ENCODE measurements at regions of chr17 and their contacts with region 1.

Region 1: GRCh38 chr17:75904749-75905521 is at the start of gene MRPL38:
- DNase-seq: peak; percentile 68
- ATAC-seq: peak; percentile 98
- H3K4me3 ChIP-seq: peak within 1 kb of the TSS; percentile 69 to 87
- H3K27ac ChIP-seq: peak within 1 kb of the TSS; percentile 87
- H3K4me1 ChIP-seq: peaks cover 11% of the 10 kb centered on the region
- H3K27me3 ChIP-seq: no peaks in the 10 kb centered on the region
- CTCF ChIP-seq: peak; percentile 99
- total RNA-seq, gene MRPL38: 165 TPM

Region 2: DNA sequence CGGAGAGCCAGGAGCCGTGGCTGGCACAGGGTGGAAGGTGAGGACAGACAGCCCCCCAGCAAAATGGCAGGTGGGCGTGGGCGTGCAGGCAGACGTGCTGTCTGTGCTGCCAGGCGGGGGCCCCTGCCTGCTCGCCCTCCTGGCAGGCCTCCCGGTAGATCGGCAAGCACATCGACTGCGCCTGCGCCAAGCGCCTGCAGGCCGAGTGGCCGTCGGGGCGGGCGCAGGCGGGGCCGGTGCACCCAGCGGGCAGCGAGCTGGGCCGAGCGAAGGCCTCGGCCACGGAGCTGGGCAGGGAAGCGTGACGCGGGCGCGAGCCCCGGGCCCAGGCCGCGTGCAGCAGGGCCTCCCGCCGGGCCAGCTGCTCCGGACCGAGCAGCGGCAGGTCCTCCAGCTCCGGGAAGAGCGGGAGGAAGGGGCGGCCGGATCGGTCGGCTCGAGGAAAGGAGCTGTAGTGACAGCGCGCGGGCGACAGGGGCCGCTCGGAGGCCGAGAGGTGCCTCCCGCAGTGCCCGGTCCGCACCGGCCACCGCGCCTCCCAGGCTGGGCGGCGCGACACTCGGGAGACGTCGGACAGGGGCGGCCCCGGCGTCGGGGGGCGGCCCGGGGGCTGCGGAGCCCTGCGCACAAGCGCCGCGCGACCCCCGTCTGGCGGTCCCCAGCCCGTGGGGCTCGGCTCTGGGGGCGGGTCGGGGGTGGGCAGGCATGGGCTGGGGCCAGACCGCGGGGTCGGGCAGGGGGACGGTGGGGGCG is 1062.2 kb before region 1 on chr17:
- CTCF ChIA-PET with region 1: no interaction called
- POLR2A ChIA-PET with region 1: interaction called, 15 read pairs
- in situ Hi-C with region 1: no loop called
- intact Hi-C with region 1: no loop called
- DNase-seq: no peak
- ATAC-seq: peak; percentile 91
- H3K4me3 ChIP-seq: peak overlapping the region; percentile 50 to 52
- H3K27ac ChIP-seq: peak overlapping the region; percentile 66
- H3K4me1 ChIP-seq: peaks cover 12% of the 10 kb centered on the region
- H3K27me3 ChIP-seq: no peaks in the 10 kb centered on the region
- CTCF ChIP-seq: peak; percentile 94

Region 3: DNA sequence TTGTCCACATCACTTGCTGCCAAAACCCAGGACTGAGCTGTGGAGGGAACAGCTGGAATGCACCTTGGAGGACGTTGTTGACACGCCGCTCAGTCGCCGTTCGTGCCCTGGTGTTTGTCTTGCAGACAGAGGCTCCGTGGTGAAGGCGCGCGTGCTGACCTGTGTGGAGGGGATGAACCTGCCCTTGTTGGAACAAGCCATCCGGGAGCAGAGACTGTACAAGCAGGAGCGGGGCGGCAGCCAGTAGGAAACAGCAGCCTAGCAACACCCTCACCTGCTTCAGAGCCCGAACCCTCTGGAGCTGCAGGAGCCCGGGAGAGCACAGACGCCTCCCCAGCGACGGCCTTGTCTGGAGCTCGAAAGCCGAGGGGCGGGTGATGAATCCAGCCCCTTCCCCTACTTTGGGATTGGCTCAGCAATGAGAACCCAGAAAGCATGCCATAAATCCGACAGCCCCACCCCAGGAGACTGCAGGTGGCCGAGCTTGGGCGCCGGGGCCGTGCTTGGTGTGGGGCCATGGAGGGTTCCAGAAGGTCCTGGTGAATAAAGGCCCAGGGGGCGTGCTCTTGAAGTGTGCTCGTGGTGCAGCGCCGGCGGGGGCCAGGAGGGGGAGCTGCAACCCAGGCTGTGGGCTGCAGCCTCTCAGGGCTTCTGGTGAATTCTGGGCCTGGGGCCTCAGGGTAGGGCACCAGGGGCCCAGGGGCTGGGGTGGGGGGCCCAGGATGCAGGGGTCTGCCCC is 95.2 kb after region 1 on chr17:
- CTCF ChIA-PET with region 1: interaction called, 5 read pairs
- POLR2A ChIA-PET with region 1: no interaction called
- in situ Hi-C with region 1: no loop called
- intact Hi-C with region 1: loop called (anchors 5 kb)
- DNase-seq: no peak
- ATAC-seq: peak; percentile 61
- H3K4me3 ChIP-seq: no peak overlapping the region
- H3K27ac ChIP-seq: no peak overlapping the region
- H3K4me1 ChIP-seq: peaks cover 11% of the 10 kb centered on the region
- H3K27me3 ChIP-seq: no peaks in the 10 kb centered on the region
- CTCF ChIP-seq: peak; percentile 98

Region 4: DNA sequence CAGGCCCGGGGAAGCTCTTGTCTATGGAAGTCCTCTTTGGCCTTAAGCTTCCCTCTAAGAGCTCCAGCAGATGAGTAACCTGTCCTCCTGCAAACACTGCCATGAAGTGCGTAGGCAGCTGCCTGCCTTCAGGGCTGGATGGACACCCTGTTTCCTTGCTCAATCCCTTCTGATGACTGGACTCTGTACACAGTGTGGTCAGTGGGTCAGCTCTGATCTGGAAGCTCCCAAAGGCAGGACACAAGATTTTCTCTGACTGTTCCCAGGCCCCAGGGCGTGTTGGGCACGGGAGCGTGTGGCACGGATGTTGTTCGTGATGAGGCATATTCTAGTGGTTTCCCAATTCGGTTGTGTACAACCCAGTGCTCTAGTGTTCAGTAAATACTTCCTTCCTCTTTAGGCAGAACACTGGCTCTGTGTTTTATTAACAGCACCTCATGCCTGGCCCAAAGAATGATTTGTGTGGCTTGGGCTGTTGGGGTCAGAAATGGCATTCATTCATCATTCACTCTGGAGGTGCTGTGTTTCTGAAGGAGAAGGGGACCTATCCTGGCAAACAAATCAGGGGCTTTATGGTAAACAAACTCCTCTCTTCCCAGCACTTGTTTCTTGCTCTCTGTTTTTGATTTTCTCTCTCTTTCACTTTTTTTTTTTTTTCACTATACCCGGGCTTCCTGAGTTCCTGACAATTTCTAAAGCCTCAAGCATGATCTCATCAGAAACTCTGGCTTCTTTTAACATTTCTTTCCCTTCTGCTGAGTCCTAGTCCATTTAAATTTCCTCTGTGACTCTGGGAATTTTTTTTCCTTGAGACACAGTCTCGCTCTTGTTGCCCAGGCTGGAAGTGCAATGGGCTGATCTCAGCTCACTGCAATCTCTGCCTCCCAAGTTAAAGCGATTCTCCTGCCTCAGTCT is 347.4 kb after region 1 on chr17:
- CTCF ChIA-PET with region 1: no interaction called
- POLR2A ChIA-PET with region 1: interaction called, 13 read pairs
- in situ Hi-C with region 1: no loop called
- intact Hi-C with region 1: no loop called
- DNase-seq: peak; percentile 81
- ATAC-seq: peak; percentile 74
- H3K4me3 ChIP-seq: no peak overlapping the region
- H3K27ac ChIP-seq: no peak overlapping the region
- H3K4me1 ChIP-seq: peaks cover 5% of the 10 kb centered on the region
- H3K27me3 ChIP-seq: no peaks in the 10 kb centered on the region
- CTCF ChIP-seq: no peak

Measured in Panc1 (cell line).